ENCODE measurements at regions of chr5 and their contacts with region 1.

Region 1: DNA sequence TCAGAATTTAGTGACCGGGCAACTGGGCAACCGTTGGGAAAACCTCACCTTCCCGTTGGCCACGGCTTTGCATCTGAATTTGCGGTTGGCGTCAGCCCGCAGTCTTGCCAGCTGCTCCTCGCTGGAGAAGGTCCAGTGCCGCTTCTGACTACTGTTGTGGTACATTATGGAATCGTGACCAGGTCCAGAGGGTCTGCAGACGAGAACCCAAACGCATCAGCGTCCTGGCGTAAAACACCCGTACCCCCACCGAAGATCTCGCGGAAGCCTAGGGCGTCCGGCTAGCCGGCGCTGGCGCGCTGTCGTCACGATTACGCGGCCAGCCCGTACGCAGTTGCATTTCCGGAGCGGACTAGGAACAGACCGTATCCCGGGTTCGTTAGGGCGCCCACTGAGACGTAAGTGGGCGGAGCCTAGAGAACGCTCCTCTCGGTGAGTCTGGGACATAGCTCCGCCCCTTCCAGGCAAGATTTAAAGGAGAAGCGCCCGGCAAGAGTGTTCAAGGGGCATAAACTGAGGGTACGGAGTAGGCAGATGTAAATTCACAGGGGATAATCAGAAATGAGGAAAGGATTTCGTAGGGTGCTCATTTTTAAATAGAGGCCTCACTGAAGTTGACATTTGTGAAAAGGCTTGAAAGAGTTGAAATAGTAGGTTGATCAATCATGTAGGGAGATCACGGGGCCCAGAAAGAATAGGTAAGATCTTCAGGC is at the start of gene CCNH:
- DNase-seq: peak; percentile 95
- H3K4me3 Mint-ChIP-seq: peak within 1 kb of the TSS; percentile 99
- H3K27ac Mint-ChIP-seq: peak within 1 kb of the TSS; percentile 94
- H3K4me1 Mint-ChIP-seq: peaks cover 40% of the 10 kb centered on the region
- H3K27me3 Mint-ChIP-seq: no peaks in the 10 kb centered on the region
- total RNA-seq, gene CCNH: 77.6 and 80.9 TPM in 2 replicates

Region 2: DNA sequence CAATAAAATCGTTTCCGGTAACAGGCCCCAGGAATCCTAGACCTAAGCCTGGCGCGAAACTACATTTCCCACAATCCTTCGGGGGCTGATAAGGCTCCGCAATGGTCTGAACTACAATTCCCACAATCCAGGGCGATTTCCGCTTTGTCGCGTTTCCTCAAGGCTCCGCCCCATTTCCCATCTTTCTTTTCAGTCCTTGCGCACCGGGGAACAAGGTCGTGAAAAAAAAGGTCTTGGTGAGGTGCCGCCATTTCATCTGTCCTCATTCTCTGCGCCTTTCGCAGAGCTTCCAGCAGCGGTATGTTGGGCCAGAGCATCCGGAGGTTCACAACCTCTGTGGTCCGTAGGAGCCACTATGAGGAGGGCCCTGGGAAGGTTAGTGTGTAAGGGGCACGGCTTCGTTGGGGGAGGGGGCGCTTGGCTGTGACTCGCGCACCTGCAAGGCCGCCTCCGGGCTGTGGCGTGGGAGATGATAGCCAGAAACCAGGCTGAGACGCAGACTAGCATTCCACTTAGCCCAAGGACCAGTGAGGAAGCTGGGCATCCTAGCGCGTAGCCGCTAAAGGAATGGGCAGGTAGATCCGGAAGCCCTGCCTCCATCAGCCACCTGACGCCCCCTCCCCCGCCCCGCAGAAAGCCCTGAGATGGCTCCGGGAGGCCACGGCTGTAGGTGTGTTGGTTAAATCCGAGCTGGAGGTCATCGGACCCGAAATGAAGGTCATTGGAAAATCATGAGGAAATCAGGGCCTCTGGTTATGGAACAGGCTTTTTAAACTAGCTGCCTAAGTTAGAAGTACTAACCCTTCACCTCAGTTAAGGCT is 794.8 kb before region 1 on chr5 and contains the start of gene COX7C:
- intact Hi-C with region 1: loop called (anchors 1 kb)
- DNase-seq: peak; percentile 90
- H3K4me3 Mint-ChIP-seq: peak within 1 kb of the TSS; percentile 98
- H3K27ac Mint-ChIP-seq: peak within 1 kb of the TSS; percentile 95
- H3K4me1 Mint-ChIP-seq: peaks cover 16% of the 10 kb centered on the region
- H3K27me3 Mint-ChIP-seq: peaks cover 7% of the 10 kb centered on the region
- total RNA-seq, gene COX7C: 436 and 471 TPM in 2 replicates

Region 3: GRCh38 chr5:87081511-87082372 is 331.0 kb before region 1 on chr5:
- intact Hi-C with region 1: loop called (anchors 2 kb)
- DNase-seq: peak; percentile 41
- H3K4me3 Mint-ChIP-seq: peak overlapping the region; percentile 65
- H3K27ac Mint-ChIP-seq: peak overlapping the region; percentile 73
- H3K4me1 Mint-ChIP-seq: peaks cover 55% of the 10 kb centered on the region
- H3K27me3 Mint-ChIP-seq: no peaks in the 10 kb centered on the region

Region 4: GRCh38 chr5:87340716-87341115 is 72.1 kb before region 1 on chr5:
- intact Hi-C with region 1: loop called (anchors 2 kb)
- DNase-seq: no peak
- H3K4me3 Mint-ChIP-seq: peak overlapping the region; percentile 70
- H3K27ac Mint-ChIP-seq: peak overlapping the region; percentile 86
- H3K4me1 Mint-ChIP-seq: peaks cover 32% of the 10 kb centered on the region
- H3K27me3 Mint-ChIP-seq: no peaks in the 10 kb centered on the region

Region 5: GRCh38 chr5:87423755-87424154 is 11.0 kb after region 1 on chr5:
- intact Hi-C with region 1: no loop called
- DNase-seq: no peak
- H3K4me3 Mint-ChIP-seq: no peak overlapping the region
- H3K27ac Mint-ChIP-seq: no peak overlapping the region
- H3K4me1 Mint-ChIP-seq: no peaks in the 10 kb centered on the region
- H3K27me3 Mint-ChIP-seq: peaks cover 5% of the 10 kb centered on the region

Region 6: DNA sequence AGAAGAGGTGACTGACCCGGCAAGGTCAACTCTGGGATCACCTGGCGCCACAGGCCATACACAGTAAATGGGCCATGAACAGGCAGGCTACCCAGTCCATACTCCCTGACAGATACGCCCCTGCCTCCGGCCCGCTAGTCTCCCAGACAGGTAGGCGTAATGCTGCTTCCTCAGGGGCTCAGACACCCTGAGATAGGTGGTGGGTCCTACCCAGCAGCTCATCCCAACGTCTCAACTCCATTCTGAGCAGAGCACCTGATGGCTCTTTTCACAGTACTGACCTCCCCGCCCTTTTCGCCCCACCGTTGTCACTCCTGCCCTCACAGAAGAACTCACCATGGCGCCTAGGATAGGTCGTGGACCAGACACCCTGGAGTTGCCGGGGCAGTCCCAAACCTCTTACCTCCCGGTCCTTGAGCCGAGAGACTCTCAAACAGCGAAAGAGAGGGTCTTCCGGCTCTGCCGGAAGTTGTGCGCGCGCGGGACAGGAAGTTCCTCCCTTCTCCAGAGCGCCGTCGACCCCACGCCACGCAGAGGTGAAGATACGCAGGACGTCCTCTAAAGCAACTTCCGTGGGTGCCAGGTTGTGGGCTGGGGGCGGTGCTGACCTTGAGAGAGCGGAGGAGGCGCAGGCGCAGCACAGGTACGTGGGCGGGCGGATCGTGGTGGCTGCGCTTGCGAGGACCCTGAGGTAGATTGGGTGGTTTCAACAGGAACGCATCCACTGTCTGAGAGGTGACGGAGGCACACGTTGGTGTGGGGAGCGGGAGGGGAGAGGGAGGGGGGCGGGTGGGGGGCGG is 855.8 kb after region 1 on chr5 and contains the start of gene TMEM161B:
- intact Hi-C with region 1: loop called (anchors 5 kb)
- DNase-seq: peak; percentile 92
- H3K4me3 Mint-ChIP-seq: peak within 1 kb of the TSS; percentile 97
- H3K27ac Mint-ChIP-seq: peak within 1 kb of the TSS; percentile 98
- H3K4me1 Mint-ChIP-seq: peaks cover 47% of the 10 kb centered on the region
- H3K27me3 Mint-ChIP-seq: no peaks in the 10 kb centered on the region
- total RNA-seq, gene TMEM161B: 26.6 and 28.4 TPM in 2 replicates

Region 7: DNA sequence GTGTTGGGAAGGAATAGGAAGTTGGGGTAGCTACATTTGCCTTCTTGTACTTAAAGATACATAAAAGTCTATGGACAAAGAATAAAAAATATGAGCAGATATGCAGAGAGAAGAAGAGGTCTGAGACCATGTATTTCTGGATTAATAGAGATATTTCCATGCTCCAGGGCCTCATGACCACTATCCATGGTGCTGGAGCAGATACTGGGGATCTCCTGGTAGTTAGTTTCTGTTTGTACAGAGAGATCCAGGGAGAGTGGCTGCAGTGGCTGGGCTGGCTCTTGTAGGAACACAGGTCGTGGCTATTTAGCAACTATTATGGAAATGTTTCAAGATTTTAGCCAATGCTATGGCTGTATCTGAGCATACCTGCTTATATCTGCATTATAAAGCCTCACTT is 1040.0 kb after region 1 on chr5:
- intact Hi-C with region 1: no loop called
- DNase-seq: no peak
- H3K4me3 Mint-ChIP-seq: no peak overlapping the region
- H3K27ac Mint-ChIP-seq: no peak overlapping the region
- H3K4me1 Mint-ChIP-seq: no peaks in the 10 kb centered on the region
- H3K27me3 Mint-ChIP-seq: peaks cover 8% of the 10 kb centered on the region

Measured in activated T-helper 1 cell treated with anti-CD3 and anti-CD28 coated beads, Interleukin-12 subunit alpha, Interleukin-12 subunit beta, Interleukin-2, Interleukin-4 antibody, amounts not matched to agents 30 ng/mL and 10 ng/mL and 1 ng/mL, durations not matched to agents 14 hours and 24 hours and 36 hours (primary cell).